ENCODE measurements at regions of chr1 and their contacts with region 1.

Region 1: GRCh38 chr1:152001391-152002249 is 8.0 kb upstream of the S100A10 start:
- DNase-seq: peak; percentile 91
- H3K4me3 ChIP-seq: no peak overlapping the region
- H3K27me3 ChIP-seq: peaks cover 18% of the 10 kb centered on the region
- CTCF ChIP-seq: peak; percentile 92

Region 2: DNA sequence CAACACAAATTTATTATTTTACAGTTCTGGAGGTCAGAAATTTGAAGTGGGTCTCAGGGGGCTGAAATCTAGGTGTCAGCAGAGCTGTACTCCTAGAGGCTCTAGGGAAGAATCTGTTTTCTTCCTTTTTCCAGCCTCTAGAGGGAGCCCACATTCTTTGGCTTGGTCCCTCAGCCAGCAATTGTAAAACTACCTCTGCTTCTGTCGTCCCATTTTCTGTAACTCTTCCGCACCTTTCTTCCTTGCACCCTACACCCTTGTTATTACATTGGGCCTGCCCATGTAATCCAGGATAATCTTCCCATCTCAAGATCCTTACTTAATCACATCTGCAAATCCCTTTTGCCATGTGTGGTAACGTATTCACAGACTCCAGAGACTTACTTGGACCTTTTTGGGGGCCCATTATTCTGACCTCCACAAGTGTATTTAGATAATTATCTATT is 67.5 kb before region 1 on chr1:
- CTCF ChIA-PET with region 1: interaction called, 315 read pairs
- POLR2A ChIA-PET with region 1: no interaction called
- DNase-seq: no peak
- H3K4me3 ChIP-seq: no peak overlapping the region
- H3K27me3 ChIP-seq: peaks cover 5% of the 10 kb centered on the region; the same call in 1 of the 2 replicates
- CTCF ChIP-seq: peak; percentile 89

Region 3: DNA sequence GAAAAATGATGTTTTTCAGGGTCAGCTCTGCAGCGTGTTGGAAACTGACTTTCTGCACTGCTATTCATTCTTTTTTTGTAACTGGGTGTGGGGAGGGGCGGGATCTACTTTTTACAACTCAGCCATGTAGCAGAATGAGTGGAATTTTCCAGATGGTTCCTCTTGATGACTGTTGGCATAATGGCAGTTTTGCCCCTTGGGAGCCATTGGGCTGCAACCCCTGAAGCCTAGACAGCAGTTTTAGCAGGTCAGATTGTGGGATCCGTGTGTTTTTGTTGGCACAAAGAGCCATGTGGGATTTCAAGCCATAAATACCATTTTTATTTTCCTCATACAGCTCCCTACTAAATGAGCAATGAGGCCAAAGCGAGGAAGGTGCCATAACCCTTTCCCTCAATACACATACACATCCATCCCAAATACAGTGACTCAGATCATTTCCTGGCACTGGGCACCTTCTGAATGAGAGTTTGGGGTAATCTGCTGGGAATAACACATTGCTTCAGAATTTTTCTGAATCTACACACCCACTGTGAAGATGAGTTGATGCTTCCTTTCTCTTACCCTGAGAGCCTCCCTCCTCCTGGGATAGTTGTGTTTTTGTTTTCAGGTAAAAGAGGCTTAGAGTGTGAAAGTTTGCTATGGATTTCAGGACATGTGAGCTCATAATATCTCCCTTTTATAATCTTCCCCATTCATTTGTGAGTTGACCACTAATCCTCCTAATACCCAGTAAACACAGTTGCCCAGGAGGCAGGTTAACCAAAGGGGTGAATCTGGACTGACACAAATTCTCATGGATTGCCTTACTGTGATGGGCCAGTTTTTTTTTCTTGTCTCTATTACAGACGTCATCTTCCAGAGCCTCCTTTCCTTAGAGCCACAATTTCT is 21.1 kb before region 1 on chr1:
- CTCF ChIA-PET with region 1: interaction called, 21 read pairs
- POLR2A ChIA-PET with region 1: no interaction called
- DNase-seq: peak; percentile 39
- H3K4me3 ChIP-seq: no peak overlapping the region
- H3K27me3 ChIP-seq: no peaks in the 10 kb centered on the region
- CTCF ChIP-seq: no peak

Region 4: DNA sequence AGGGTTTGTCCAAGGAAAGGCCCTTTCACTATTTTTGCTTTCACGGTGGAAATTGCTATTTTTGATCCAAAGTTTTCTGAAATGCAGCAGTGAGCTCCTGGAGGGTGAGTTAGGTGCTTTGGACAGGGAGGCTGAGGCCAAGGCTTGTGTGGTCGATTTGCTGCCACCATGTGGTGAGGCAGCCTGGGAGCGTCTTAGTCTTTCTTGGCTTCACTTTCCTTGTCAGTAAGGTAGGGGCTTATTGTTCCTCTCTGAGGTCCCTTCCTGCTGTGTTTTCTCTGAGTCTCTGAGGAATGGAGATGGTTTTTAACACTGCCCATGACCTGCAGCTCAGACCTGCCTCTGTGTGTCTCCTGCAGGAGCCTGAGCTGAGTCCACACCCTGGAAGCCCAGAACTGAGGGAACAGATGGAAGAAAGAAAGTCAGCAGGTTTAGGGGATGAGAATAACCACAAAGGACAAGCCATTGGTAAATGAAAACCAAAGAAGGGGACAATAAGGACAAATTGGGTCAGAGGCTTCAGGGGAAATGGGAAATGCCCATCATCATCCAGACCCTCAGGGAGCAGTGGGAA is 12.1 kb after region 1 on chr1:
- CTCF ChIA-PET with region 1: interaction called, 66 read pairs
- POLR2A ChIA-PET with region 1: no interaction called
- DNase-seq: no peak
- H3K4me3 ChIP-seq: no peak overlapping the region
- H3K27me3 ChIP-seq: peaks cover 12% of the 10 kb centered on the region
- CTCF ChIP-seq: peak; percentile 82